A549 (cell line): ENCODE measurements at regions of chr17 and their contacts with region 1.

Region 1: GRCh38 chr17:19338031-19338990 is 24.2 kb downstream of the B9D1 start:
- DNase-seq: peak; percentile 73 to 82
- ATAC-seq: peak; percentile 67 to 80
- H3K4me3 ChIP-seq: no peak overlapping the region
- H3K27ac ChIP-seq: no peak overlapping the region; a peak in 1 of 6 replicates
- H3K4me1 ChIP-seq: peaks cover 5% of the 10 kb centered on the region; the same call in 2 of the 3 replicates
- CTCF ChIP-seq: peak; percentile 58
- EP300 ChIP-seq: no peak
- POLR2A ChIP-seq: no peak
- RAD21 ChIP-seq: peak; percentile 44 to 51; a peak in 4 of 5 replicates

Region 2: GRCh38 chr17:19281161-19281560 is 57.1 kb before region 1 on chr17:
- CTCF ChIA-PET with region 1: interaction called, 11 read pairs
- POLR2A ChIA-PET with region 1: no interaction called
- DNase-seq: no peak
- ATAC-seq: no peak
- H3K4me3 ChIP-seq: no peak overlapping the region
- H3K27ac ChIP-seq: peak overlapping the region in 1 of 2 experiments; percentile 35; a peak in 1 of 6 replicates
- H3K4me1 ChIP-seq: peaks cover 16% of the 10 kb centered on the region
- CTCF ChIP-seq: no peak
- EP300 ChIP-seq: no peak
- POLR2A ChIP-seq: no peak
- RAD21 ChIP-seq: no peak

Region 3: GRCh38 chr17:19317359-19318095 is 20.8 kb before region 1 on chr17:
- CTCF ChIA-PET with region 1: interaction called, 12 read pairs
- POLR2A ChIA-PET with region 1: no interaction called
- DNase-seq: peak in 1 of 2 experiments; percentile 60
- ATAC-seq: peak; percentile 76 to 81
- H3K4me3 ChIP-seq: no peak overlapping the region
- H3K27ac ChIP-seq: no peak overlapping the region
- H3K4me1 ChIP-seq: 0 out of 3 replicates have a peak, but pooled peaks cover 5% of the 10 kb centered on the region
- CTCF ChIP-seq: peak; percentile 16; the same call in 1 of the 3 replicates
- EP300 ChIP-seq: no peak
- POLR2A ChIP-seq: no peak
- RAD21 ChIP-seq: peak; percentile 30 to 46; a peak in 3 of 5 replicates

Region 4: DNA sequence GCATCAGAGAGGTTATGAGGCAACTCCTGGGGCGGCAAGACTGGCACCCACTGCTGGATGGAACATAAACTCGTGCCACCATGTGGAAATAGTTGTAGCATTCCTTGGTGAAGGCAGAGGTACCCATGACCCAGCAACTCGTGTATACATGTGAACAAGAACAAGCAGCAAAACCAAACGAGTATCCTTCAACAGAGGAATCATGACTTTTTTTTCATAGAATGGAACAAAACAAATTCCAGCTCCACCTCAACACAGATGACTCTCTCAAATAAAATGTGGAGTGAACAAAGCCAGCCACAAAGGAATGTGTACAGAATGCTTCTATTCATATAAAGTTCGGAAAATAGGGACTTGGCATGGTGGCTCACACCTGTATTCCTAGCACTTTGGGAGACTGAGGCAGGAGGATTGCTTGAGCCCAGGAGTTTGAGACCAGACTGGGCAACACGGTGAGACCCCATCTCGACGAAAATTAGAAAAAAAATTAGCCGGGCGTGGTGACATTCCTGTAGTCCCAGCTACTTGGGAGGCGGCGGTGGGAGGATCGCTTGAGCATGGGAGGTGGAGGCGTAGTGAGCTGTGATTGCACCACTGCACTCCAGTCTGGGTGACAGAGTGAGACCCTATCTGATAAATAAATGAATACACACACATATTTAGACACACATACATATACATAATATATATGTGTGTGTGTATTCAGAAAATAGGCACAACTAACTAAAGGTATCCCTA is 11.1 kb before region 1 on chr17:
- CTCF ChIA-PET with region 1: interaction called, 12 read pairs
- POLR2A ChIA-PET with region 1: no interaction called
- DNase-seq: peak; percentile 62 to 77
- ATAC-seq: peak; percentile 62 to 76
- H3K4me3 ChIP-seq: no peak overlapping the region
- H3K27ac ChIP-seq: peak overlapping the region; percentile 30 to 63
- H3K4me1 ChIP-seq: peaks cover 23% of the 10 kb centered on the region
- CTCF ChIP-seq: no peak
- EP300 ChIP-seq: no peak
- POLR2A ChIP-seq: no peak
- RAD21 ChIP-seq: no peak